ENCODE measurements at regions of chr12 and their contacts with region 1.

Region 1: GRCh38 chr12:47742253-47742825 is 16.3 kb downstream of the RAPGEF3 start:
- DNase-seq: peak; percentile 88
- ATAC-seq: peak; percentile 31
- H3K4me3 Mint-ChIP-seq: no peak overlapping the region
- H3K27ac Mint-ChIP-seq: no peak overlapping the region
- H3K4me1 Mint-ChIP-seq: peaks cover 32% of the 10 kb centered on the region
- H3K27me3 Mint-ChIP-seq: peaks cover 10% of the 10 kb centered on the region
- CTCF ChIP-seq: peak; percentile 99

Region 2: GRCh38 chr12:47715393-47715876 is 26.9 kb before region 1 on chr12:
- CTCF ChIA-PET with region 1: interaction called, 104 read pairs
- POLR2A ChIA-PET with region 1: no interaction called
- DNase-seq: peak; percentile 71
- ATAC-seq: peak; percentile 43
- H3K4me3 Mint-ChIP-seq: no peak overlapping the region
- H3K27ac Mint-ChIP-seq: no peak overlapping the region
- H3K4me1 Mint-ChIP-seq: peaks cover 29% of the 10 kb centered on the region
- H3K27me3 Mint-ChIP-seq: peaks cover 72% of the 10 kb centered on the region
- CTCF ChIP-seq: peak; percentile 72

Region 3: DNA sequence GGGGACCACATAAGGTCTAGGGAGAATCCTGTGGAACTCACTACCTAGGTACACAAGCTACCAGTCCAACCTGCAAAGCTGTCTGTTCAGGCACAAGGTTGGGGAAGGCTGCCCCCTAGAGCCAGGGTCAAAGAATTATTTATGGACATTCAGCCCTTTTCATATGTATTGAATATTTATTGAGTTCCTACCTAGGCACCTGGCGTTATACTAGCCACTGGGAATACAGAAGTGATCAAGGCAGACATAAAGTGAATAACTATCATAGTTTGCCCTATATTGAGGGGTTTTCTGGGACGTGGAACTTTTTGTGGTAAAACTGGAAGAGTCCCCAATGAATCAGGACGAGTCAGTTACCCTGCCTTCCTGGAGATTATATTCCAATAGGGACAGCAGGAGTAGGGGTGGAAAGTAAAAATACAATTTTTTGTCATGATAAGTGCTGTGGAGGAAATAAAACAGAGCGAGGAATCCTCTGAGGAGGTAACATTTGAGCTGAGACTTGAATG is 24.9 kb after region 1 on chr12:
- CTCF ChIA-PET with region 1: interaction called, 735 read pairs
- POLR2A ChIA-PET with region 1: interaction called, 3 read pairs
- DNase-seq: peak; percentile 76
- ATAC-seq: peak; percentile 61
- H3K4me3 Mint-ChIP-seq: no peak overlapping the region
- H3K27ac Mint-ChIP-seq: no peak overlapping the region
- H3K4me1 Mint-ChIP-seq: peaks cover 18% of the 10 kb centered on the region
- H3K27me3 Mint-ChIP-seq: peaks cover 6% of the 10 kb centered on the region
- CTCF ChIP-seq: peak; percentile 51; the same call in 1 of the 2 replicates

Region 4: DNA sequence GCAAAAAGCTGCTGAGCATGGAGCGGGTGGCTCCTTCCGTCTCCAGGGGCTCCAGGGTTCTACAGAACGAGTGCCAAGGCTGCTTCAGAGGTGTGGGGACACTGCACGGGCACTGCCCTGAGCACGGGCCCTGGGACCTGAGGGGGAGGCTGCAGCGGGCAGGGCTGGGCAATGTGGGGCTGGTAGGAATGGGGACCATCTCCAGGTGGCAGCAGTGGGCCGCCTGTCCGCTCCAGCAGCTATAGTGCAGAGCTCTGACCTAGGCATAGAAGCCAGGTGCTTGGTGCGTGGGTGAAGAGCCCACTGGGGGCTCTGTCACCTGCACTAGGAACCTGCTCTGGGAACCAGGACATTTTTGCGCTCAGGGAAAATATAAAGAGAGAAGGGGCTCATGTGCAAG is 55.1 kb after region 1 on chr12:
- CTCF ChIA-PET with region 1: interaction called, 28 read pairs
- POLR2A ChIA-PET with region 1: no interaction called
- DNase-seq: peak; percentile 69
- ATAC-seq: peak; percentile 83
- H3K4me3 Mint-ChIP-seq: no peak overlapping the region
- H3K27ac Mint-ChIP-seq: no peak overlapping the region; the same call in 1 of the 2 replicates
- H3K4me1 Mint-ChIP-seq: peaks cover 28% of the 10 kb centered on the region
- H3K27me3 Mint-ChIP-seq: no peaks in the 10 kb centered on the region
- CTCF ChIP-seq: 0 out of 2 replicates have a peak, but pooled peaks have one; percentile 27

Region 5: GRCh38 chr12:47828608-47829536 is 86.5 kb after region 1 on chr12:
- CTCF ChIA-PET with region 1: interaction called, 14 read pairs
- POLR2A ChIA-PET with region 1: no interaction called
- DNase-seq: peak; percentile 58
- ATAC-seq: peak; percentile 84
- H3K4me3 Mint-ChIP-seq: 0 out of 2 replicates have a peak overlapping the region, but pooled peaks have one; percentile 14
- H3K27ac Mint-ChIP-seq: no peak overlapping the region
- H3K4me1 Mint-ChIP-seq: peaks cover 37% of the 10 kb centered on the region
- H3K27me3 Mint-ChIP-seq: peaks cover 4% of the 10 kb centered on the region; the same call in 1 of the 2 replicates
- CTCF ChIP-seq: no peak

Measured in WTC11 (cell line).